ENCODE measurements at regions of chr17 and their contacts with region 1.

Region 1: GRCh38 chr17:38982858-38983746 is 15.9 kb upstream of the FBXO47 start:
- DNase-seq: no peak

Region 2: DNA sequence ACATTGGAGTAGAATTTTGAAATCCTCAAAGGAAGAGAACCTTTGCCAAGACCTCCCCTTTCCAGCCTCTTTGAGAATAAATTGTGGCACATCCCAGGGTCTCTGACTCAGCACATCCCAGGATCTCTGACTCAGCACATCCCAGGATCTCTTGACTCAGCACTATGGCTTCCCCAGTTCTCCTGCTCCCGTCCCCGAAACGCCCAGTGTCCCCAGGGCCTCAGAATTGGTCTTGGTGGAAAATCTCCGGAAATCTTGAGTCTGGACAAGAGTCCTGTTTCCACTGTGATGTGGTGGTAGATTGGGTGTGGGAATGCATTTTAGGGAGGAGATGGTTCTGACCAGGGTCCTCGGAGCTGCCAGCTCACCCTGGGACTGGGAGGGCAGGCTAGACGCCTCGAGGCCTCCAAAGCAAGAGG is 149.1 kb after region 1 on chr17:
- intact Hi-C with region 1: loop called in 1 of 2 experiments (anchors 1 kb)
- DNase-seq: no peak

Region 3: GRCh38 chr17:39153599-39154051 is 170.5 kb after region 1 on chr17:
- intact Hi-C with region 1: loop called (anchors 2 to 5 kb)
- DNase-seq: peak; percentile 97

Region 4: GRCh38 chr17:39235555-39236449 is 252.7 kb after region 1 on chr17:
- intact Hi-C with region 1: loop called (anchors 10 kb)
- DNase-seq: peak; percentile 19

Region 5: DNA sequence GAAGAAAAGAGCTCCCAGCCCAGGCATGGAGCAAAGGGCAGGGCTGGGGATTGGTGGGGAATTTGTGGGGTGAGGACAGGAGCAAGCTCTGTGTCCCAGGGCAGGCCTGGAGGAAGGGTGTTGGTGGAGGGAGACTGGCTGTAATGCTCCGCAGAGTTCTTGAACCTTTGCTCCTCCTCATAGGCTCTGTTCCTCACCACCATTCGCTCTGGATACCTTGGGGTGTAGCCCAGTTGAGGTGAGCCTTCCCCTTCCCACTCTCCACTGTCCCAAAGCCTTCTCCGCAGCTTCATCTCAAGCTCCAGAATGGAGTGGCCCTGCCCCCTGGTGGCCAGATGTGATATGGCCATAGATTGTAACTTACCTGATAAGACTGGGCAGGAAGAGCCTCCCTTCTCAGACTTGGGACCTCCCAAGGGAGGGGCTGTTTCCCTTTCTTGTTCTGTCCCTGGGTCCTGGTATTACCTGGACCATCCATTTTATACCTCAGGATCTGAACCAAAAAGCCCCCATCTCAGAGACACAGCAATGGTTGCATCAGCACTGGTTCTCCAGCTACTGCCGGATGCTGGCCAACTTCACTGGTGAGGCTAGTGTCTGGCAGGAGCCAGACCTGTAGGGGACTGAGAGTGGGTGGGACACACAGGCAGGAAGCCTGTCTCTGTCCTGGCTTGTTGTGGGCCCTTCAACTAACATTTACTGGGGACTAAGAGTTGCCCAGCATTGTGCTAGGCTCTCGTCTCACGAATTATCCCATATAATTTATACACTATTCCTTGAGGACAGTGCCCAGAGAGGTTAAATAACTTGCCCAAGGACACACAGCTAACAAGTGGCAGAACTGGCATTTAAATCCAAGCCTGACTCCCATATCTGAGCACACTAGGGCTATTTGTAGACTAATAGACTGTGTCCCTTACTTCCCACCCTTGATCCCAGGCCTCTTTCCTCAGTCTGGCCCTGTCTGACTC is 261.8 kb after region 1 on chr17:
- intact Hi-C with region 1: loop called in 1 of 2 experiments (anchors 10 kb)
- DNase-seq: peak; percentile 94